Right cardiac atrium (tissue), 5 donors: ENCODE measurements at regions of chr20 and their contacts with region 1.

Region 1: GRCh38 chr20:17431621-17432364 is 99.4 kb downstream of the BFSP1 start:
- DNase-seq: peak; percentile 49 to 76 (median 64)
- ATAC-seq: peak in 1 of 2 donors; percentile 44
- H3K4me3 ChIP-seq: no peak overlapping the region
- H3K27ac ChIP-seq: no peak overlapping the region
- H3K4me1 ChIP-seq: no peaks in the 10 kb centered on the region
- H3K27me3 ChIP-seq: no peaks in the 10 kb centered on the region

Region 2: GRCh38 chr20:16801919-16802911 is 629.6 kb before region 1 on chr20:
- intact Hi-C with region 1: loop called (anchors 2 to 10 kb)
- DNase-seq: peak; percentile 44 to 81 (median 64)
- ATAC-seq: no peak
- H3K4me3 ChIP-seq: no peak overlapping the region
- H3K27ac ChIP-seq: no peak overlapping the region
- H3K4me1 ChIP-seq: no peaks in the 10 kb centered on the region
- H3K27me3 ChIP-seq: peaks cover 2% of the 10 kb centered on the region

Region 3: DNA sequence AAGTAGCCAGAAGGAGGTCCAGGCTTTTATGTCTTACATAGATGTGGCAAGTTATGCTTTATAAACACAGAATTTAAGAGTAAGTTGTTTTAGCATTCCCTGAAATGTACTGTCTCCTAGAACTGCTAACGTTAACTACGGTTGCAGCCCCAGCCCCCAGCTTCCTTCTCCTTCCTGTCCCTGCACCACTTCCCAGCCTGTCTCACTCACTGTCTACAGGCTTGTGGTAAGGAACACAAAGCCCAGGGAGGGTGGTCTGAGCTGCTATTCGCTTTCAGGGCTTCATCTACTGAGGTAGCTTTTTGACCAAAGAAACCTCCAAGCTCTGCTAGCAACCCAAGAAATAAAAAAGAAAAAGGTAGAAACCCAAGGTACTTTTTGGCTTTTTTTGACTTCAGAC is 169.0 kb before region 1 on chr20:
- intact Hi-C with region 1: no loop called
- DNase-seq: no peak
- ATAC-seq: no peak
- H3K4me3 ChIP-seq: no peak overlapping the region
- H3K27ac ChIP-seq: no peak overlapping the region
- H3K4me1 ChIP-seq: no peaks in the 10 kb centered on the region
- H3K27me3 ChIP-seq: no peaks in the 10 kb centered on the region

Region 4: GRCh38 chr20:17610566-17611289 is 178.9 kb after region 1 on chr20:
- intact Hi-C with region 1: no loop called
- DNase-seq: peak in 2 of 3 donors; percentile 34 to 63
- ATAC-seq: peak; percentile 0 to 2
- H3K4me3 ChIP-seq: no peak overlapping the region
- H3K27ac ChIP-seq: no peak overlapping the region
- H3K4me1 ChIP-seq: peaks cover 8% of the 10 kb centered on the region
- H3K27me3 ChIP-seq: no peaks in the 10 kb centered on the region